Naive thymus-derived CD4-positive, alpha-beta T cell (primary cell): ENCODE measurements at regions of chr11 and their contacts with region 1.

Region 1: DNA sequence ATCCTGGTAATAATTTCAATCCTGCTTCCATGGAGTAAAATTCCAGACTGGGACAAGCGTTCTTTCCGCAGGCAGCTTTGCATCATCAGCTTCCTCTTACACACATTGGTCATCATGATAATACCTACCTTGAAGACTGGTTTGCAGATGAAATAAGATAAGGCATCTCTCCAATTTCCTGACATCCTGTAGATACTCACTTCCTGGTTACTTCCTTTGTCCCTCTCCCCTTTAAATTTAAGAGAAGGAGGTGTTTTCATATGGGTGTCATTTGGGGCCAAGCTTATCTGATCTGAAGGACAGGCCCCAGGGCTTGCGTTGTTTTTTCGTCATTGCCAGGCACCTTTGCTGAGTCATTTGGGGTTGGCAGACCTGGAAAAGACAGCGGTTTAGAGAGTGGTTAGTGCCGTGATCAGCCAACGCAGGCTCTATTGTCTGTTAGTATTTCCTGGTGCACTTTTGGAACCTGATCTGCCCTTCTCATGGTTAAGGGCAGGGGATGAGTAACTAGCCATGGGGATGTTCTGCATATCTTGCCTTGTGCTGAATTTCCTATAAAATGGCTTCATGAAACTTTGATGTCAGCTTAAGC is 24.1 kb downstream of the GRAMD1B start:
- DNase-seq: peak in 2 of 9 donors; percentile 19 to 75
- ATAC-seq: peak; percentile 62
- H3K4me3 ChIP-seq: no peak overlapping the region
- H3K4me3 Mint-ChIP-seq: peak overlapping the region in 6 of 10 donors; percentile 3 to 73 (median 8)
- H3K27ac ChIP-seq: no peak overlapping the region
- H3K27ac Mint-ChIP-seq: peak overlapping the region in 7 of 9 donors; percentile 2 to 94 (median 27)
- H3K4me1 ChIP-seq: peaks cover 4 to 22% of the 10 kb centered on the region in 2 donors
- H3K4me1 Mint-ChIP-seq: peaks cover 10 to 90% (median 36%) of the 10 kb centered on the region in 7 donors
- H3K27me3 ChIP-seq: no peaks in the 10 kb centered on the region
- H3K27me3 Mint-ChIP-seq: no peaks in the 10 kb centered on the region

Region 2: GRCh38 chr11:122743949-122744348 is 710.2 kb before region 1 on chr11:
- CTCF ChIA-PET with region 1: no interaction called
- POLR2A ChIA-PET with region 1: no interaction called
- intact Hi-C with region 1: loop called in 1 of 2 experiments (anchors 5 kb)
- DNase-seq: peak; percentile 28 to 90 (median 80)
- ATAC-seq: peak; percentile 75
- H3K4me3 ChIP-seq: peak overlapping the region; percentile 39
- H3K4me3 Mint-ChIP-seq: no peak overlapping the region
- H3K27ac ChIP-seq: peak overlapping the region; percentile 84
- H3K27ac Mint-ChIP-seq: no peak overlapping the region
- H3K4me1 ChIP-seq: peaks cover 58 to 66% of the 10 kb centered on the region in 2 donors
- H3K4me1 Mint-ChIP-seq: peaks cover 0 to 40% (median 18%) of the 10 kb centered on the region in 7 donors
- H3K27me3 ChIP-seq: no peaks in the 10 kb centered on the region
- H3K27me3 Mint-ChIP-seq: peaks cover 0 to 21% (median 0%) of the 10 kb centered on the region in 5 donors

Region 3: DNA sequence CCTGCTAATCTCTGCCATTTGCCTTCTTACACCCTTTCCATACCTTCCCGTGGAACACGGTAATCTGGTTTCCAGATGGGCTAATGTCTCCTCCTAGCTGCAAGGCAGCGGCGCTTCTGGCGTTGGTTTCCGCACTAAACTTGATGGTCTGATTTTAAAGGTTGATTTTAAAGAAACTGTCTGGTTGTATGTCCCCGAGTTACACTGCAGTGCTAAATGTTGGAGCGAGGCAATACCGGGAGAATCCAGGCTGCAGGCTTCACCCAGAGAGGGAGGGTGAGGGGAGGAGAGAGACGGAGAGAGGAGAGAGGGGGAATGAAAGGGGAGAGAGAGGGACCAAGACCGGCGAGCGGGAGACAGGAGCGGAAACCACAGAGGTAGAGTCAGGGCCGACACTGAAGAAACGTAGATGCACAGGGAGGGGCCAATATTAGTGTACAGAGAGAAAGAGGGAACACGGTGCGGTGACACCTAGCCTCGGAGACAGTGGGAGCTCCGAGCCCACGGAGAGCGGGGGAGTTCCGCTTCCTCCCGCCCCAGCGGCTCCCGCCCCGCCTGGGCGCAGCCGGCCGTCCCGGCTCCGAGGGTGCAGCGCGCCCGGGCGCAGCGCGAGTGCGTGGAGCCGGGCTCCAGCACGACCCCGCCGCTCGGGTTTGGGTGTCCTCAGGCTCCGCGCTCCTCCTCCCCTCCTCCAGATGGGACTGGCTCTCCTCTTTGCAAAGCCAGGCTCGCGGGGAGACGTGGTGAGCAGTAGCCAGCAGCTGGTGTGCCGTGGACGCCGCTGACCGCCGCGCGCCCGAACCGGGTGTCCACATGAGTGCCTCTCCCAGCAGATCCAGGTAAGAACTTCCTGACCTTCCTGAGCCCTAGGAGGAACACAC is 96.0 kb before region 1 on chr11:
- CTCF ChIA-PET with region 1: no interaction called
- POLR2A ChIA-PET with region 1: no interaction called
- intact Hi-C with region 1: loop called in 1 of 2 experiments (anchors 2 kb)
- DNase-seq: peak in 1 of 9 donors; percentile 64
- ATAC-seq: peak; percentile 59
- H3K4me3 ChIP-seq: peak overlapping the region; percentile 56
- H3K4me3 Mint-ChIP-seq: peak overlapping the region; percentile 4 to 98 (median 72)
- H3K27ac ChIP-seq: no peak overlapping the region
- H3K27ac Mint-ChIP-seq: peak overlapping the region in 1 of 9 donors; percentile 92
- H3K4me1 ChIP-seq: peaks cover 0 to 16% of the 10 kb centered on the region in 2 donors
- H3K4me1 Mint-ChIP-seq: peaks cover 8 to 61% (median 15%) of the 10 kb centered on the region in 7 donors
- H3K27me3 ChIP-seq: peaks cover 0 to 2% of the 10 kb centered on the region in 2 donors
- H3K27me3 Mint-ChIP-seq: peaks cover 0 to 55% (median 46%) of the 10 kb centered on the region in 5 donors

Region 4: DNA sequence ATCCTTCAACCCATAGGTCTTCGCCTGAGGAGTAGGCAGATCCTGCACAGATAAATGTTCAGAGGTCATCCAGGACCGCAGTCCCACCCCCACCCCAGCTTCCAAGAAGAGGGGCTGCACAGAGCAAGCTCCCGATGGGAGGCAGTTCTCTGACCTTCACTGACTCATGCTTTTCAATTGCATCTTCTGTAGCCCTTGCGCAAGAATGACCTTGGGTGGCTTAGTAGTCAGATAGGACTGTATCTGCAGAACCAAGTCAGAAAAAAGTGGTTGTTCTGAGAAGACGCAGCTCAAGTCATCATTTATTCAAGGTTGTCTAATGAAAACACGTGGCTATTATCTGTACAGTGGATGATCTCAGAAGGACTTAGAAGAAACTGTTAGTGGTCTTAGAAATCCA is 40.5 kb before region 1 on chr11:
- CTCF ChIA-PET with region 1: no interaction called
- POLR2A ChIA-PET with region 1: no interaction called
- intact Hi-C with region 1: no loop called
- DNase-seq: no peak
- ATAC-seq: peak; percentile 66
- H3K4me3 ChIP-seq: no peak overlapping the region
- H3K4me3 Mint-ChIP-seq: no peak overlapping the region
- H3K27ac ChIP-seq: no peak overlapping the region
- H3K27ac Mint-ChIP-seq: no peak overlapping the region
- H3K4me1 ChIP-seq: no peaks in the 10 kb centered on the region
- H3K4me1 Mint-ChIP-seq: peaks cover 0 to 21% (median 0%) of the 10 kb centered on the region in 7 donors
- H3K27me3 ChIP-seq: no peaks in the 10 kb centered on the region
- H3K27me3 Mint-ChIP-seq: peaks cover 0 to 16% (median 10%) of the 10 kb centered on the region in 5 donors

Region 5: DNA sequence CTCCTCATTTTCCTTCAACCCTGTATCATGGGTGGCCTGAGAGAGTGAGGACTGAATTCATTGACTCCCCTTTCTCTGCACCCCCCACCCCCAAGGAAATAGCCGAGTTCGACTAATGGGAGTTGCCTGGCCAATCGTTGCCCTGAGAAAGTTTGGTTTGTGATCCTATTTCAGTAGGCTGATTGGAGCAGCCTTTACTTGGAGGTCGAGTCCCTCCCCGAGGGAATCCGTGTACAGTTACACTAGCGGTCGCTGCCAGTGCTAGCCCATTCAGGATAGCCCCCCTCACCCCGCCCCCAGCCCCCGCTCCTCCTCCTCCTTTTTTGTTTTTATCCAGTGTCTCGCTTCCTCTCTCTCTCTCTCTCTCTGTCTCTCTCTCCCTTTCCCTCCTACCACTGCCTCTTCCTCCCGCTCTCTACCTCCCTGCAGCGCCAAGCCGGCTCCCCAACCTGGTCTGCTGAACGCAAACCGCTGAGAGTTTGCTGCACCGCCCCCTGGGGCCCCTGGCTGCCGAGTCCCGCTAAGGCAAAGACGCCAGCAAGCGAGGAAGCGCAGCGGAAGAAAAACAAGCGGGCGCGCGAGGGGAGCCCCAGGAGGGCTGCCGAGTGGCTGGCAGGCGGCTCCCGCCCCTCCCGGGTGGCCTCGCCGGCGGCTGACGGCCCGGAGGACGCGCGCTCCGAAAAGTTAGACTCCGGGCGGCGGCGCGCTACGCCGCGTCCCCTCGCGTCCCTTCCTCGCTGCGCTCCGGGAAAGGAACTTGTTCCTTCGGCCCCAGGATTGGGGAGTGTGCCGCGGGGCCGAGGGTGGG is 24.0 kb before region 1 on chr11 and contains the start of gene GRAMD1B:
- CTCF ChIA-PET with region 1: no interaction called
- POLR2A ChIA-PET with region 1: interaction called, 7 read pairs
- intact Hi-C with region 1: loop called in 1 of 2 experiments (anchors 1 kb)
- DNase-seq: peak; percentile 60 to 84 (median 78)
- ATAC-seq: peak; percentile 84
- H3K4me3 ChIP-seq: peak within 1 kb of the TSS; percentile 53
- H3K4me3 Mint-ChIP-seq: peak within 1 kb of the TSS; percentile 85 to 99 (median 88)
- H3K27ac ChIP-seq: peak within 1 kb of the TSS; percentile 60
- H3K27ac Mint-ChIP-seq: peak within 1 kb of the TSS; percentile 46 to 94 (median 76)
- H3K4me1 ChIP-seq: peaks cover 0 to 12% of the 10 kb centered on the region in 2 donors
- H3K4me1 Mint-ChIP-seq: peaks cover 15 to 65% (median 25%) of the 10 kb centered on the region in 7 donors
- H3K27me3 ChIP-seq: no peaks in the 10 kb centered on the region
- H3K27me3 Mint-ChIP-seq: no peaks in the 10 kb centered on the region
- total RNA-seq, gene GRAMD1B: 9.7 to 88.9 (median 14.0) TPM

Region 6: DNA sequence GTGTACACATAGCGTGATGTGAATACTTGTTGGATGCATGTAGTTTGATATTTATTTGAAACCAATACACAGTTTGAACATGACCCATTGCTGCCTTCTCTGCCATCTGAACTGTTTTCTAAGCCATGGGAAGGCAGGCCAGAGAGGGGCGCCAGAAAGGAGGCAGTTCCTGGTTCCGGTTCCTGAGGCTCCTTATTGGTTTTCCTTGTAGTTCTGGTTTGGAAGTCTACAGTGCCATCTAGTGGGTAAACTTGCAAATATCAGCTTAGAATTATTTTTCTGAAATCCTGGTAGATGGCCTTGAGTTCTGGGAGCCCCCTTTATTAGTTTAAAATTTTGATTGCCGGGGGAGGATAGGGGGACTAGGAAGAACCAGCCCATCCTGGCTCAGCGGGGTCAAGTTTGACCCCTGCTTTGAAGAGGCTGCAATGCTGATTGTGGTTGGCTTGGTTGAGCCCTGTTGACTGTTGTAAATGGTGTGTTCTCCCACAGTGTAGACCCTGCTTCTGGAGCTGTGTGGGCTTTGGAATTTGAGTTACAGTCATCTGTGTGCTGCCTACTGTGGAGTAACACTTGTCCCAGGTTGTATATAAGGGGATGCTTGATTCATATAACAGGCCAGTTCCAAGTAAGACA is 24.3 kb after region 1 on chr11:
- CTCF ChIA-PET with region 1: no interaction called
- POLR2A ChIA-PET with region 1: no interaction called
- intact Hi-C with region 1: loop called in 1 of 2 experiments (anchors 2 kb)
- DNase-seq: peak in 7 of 9 donors; percentile 27 to 61 (median 50)
- ATAC-seq: peak; percentile 64
- H3K4me3 ChIP-seq: no peak overlapping the region
- H3K4me3 Mint-ChIP-seq: peak overlapping the region in 1 of 10 donors; percentile 39
- H3K27ac ChIP-seq: no peak overlapping the region
- H3K27ac Mint-ChIP-seq: peak overlapping the region in 1 of 9 donors; percentile 30
- H3K4me1 ChIP-seq: no peaks in the 10 kb centered on the region
- H3K4me1 Mint-ChIP-seq: peaks cover 0 to 59% (median 5%) of the 10 kb centered on the region in 7 donors
- H3K27me3 ChIP-seq: no peaks in the 10 kb centered on the region
- H3K27me3 Mint-ChIP-seq: no peaks in the 10 kb centered on the region